Colonic mucosa (tissue), 4 donors: ENCODE measurements at regions of chr10 and their contacts with region 1.

Region 1: GRCh38 chr10:68992636-68993440 is 4.2 kb downstream of the KIFBP start:
- DNase-seq: no peak
- H3K4me3 ChIP-seq: no peak overlapping the region
- H3K27ac ChIP-seq: no peak overlapping the region
- H3K4me1 ChIP-seq: peaks cover 5% of the 10 kb centered on the region
- H3K27me3 ChIP-seq: no peaks in the 10 kb centered on the region
- CTCF ChIP-seq: no peak

Region 2: DNA sequence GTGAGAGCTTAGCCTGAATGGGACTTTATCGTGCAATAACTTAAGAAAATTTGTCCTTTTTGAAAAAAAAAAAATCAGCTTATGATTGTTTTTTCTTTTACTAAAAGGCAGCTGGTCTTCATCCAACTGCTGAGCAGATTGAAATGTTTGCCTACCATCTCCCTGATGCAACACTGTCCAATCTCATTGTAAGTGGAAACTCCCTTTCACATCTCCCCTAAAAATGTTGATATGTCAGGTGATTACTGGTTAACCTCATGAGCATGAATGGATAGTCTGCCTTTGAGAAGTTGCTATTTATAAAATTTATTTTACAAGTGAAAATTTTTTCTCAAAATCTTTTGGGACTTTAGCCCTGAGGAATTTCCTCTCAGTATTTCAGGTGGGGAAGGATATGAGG is 209.5 kb after region 1 on chr10:
- intact Hi-C with region 1: loop called (anchors 10 kb)
- DNase-seq: no peak
- H3K4me3 ChIP-seq: no peak overlapping the region
- H3K27ac ChIP-seq: no peak overlapping the region
- H3K4me1 ChIP-seq: no peaks in the 10 kb centered on the region
- H3K27me3 ChIP-seq: no peaks in the 10 kb centered on the region
- CTCF ChIP-seq: no peak